ENCODE measurements at regions of chr19 and their contacts with region 1.

Region 1: GRCh38 chr19:49546825-49547565 is 19.2 kb downstream of the RCN3 start:
- DNase-seq: peak; percentile 60
- H3K4me3 Mint-ChIP-seq: peak overlapping the region; percentile 41
- H3K27ac Mint-ChIP-seq: peak overlapping the region; percentile 49
- H3K4me1 Mint-ChIP-seq: peaks cover 23% of the 10 kb centered on the region
- H3K27me3 Mint-ChIP-seq: no peaks in the 10 kb centered on the region

Region 2: DNA sequence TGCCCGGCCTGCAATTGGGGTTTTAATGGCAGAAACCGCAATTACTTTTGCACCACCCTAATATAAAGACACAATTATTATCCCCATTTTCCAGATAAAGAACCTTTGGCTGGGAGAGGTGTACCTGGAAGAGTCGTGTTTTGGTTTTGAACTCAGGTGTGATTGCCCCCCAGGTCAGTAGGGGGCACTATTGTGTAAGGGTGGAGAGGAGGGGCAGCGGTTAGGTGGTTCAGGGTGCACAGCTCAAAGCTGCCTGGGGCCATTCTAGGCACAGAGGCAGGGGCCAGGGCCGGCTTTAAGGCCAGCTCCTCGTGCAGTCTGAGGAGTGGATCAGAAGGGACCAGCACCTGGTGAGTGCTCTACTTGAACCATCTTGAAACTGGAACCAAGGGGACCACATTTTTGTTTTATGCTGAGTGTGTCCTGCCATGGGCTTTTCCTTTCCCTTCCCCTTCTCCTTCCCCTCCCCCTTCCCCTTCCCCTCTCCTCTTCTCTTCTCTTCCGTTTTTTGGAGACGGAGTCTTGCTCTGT is 40.4 kb before region 1 on chr19:
- intact Hi-C with region 1: loop called (anchors 1 kb)
- DNase-seq: peak; percentile 69
- H3K4me3 Mint-ChIP-seq: no peak overlapping the region
- H3K27ac Mint-ChIP-seq: no peak overlapping the region
- H3K4me1 Mint-ChIP-seq: peaks cover 14% of the 10 kb centered on the region
- H3K27me3 Mint-ChIP-seq: peaks cover 4% of the 10 kb centered on the region

Measured in activated T-helper 2 cell treated with anti-CD3 and anti-CD28 coated beads, Interferon-gamma antibody, Interleukin-2, Interleukin-4, amounts not matched to agents 10 μg/mL and 5 μg/mL and 100 μg/mL, durations not matched to agents 14 hours and 24 hours and 36 hours (primary cell).